IMR-90 (cell line): ENCODE measurements at regions of chr12 and their contacts with region 1.

Region 1: DNA sequence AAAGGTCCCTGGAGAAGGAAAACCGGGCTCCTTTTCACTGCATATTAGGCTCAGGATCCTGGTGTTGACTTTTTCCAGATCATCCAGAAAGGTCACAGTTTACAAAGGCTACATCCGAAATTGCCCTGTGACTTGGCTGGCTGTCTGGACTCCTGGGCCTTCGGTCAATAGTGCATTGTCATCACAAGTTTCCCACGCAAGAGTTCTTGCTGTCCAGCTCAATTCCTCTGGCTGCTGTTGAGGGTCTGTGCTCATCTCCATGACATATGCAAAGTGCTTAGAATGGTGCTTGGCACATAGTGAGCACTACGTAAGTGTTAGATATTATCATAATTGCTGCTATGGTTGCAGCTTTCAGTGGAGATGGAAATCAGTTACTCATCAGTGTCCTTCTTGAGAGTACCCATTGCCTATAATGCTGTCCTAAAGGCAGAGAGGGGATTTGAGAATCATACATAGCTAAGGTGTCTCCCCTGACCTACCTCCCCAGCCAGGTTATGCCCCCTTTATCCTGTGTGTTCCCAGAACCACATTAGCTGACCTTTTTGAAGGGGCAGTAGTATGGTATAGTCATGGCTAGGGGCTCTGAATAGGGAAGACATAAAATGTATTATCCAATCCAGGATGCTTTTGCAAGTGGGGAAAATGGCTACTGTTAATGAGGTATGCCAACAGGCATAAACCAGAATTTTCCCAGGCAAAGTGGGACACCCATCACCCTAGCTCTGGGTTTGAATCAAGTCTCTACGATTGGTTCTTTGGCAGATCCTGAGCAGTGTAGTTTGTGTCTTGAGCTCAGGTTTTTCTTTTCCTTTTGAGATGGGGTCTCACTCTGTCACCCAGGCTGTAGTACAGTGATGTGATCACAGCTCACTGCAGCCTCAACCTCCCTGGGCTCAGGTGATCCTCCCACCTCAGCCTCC is 132.0 kb upstream of the CCND2 start:
- DNase-seq: no peak
- ATAC-seq: no peak
- H3K4me3 ChIP-seq: no peak overlapping the region
- H3K27ac ChIP-seq: no peak overlapping the region
- H3K4me1 ChIP-seq: no peaks in the 10 kb centered on the region
- H3K27me3 ChIP-seq: peaks cover 4% of the 10 kb centered on the region; the same call in 1 of the 2 replicates
- CTCF ChIP-seq: no peak
- POLR2A ChIP-seq: no peak
- RAD21 ChIP-seq: no peak

Region 2: DNA sequence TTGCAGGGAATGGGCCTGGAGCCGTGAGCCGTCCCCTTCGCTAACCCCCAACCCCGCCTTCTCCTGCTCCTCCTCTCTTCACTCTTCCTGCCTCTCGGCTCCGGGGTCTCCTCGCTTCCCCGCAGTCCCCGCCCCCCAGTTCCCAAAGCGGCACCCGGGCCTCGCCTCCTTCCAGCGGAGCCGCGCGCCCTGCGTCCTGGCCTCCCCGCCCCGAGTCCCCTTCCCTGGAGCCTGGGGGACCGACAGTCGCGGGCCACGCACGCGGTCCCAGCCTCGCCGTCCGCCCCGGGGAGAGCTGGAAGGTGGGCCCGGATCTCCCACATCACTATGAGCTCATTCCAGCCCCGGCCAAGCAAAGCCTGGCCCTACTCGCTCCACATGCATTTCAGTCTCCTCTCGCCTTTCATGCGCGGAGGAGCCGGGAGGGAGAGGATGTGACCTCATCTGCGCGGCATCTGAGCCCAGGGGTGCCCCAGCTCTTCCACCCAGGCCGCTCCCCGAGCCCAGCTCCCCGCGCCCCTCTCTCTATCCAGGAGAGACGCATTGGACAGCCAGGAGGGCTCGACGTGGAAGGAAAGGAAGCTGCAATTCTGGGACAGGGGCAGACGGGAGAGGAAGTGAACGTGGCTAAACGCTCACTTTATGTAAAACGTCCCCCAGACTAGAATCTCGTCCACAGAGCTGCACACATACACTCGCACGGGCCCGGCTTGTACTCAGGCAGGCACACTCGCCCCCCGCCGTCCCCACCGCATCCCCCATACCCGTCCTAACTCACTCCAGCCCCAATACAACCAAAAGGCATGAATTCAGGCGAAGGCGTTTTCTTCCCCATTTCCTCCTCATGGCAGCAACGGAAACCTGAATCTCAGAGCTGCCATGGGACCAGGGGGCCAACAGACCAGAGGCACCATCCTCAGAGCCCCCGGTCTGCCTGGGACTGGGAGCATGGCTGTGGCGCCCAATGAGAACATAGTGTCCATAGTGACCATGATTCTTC is 23.2 kb after region 1 on chr12:
- CTCF ChIA-PET with region 1: no interaction called
- POLR2A ChIA-PET with region 1: interaction called, 4 read pairs
- dilution Hi-C with region 1: no loop called
- in situ Hi-C with region 1: no loop called
- intact Hi-C with region 1: loop called (anchors 2 kb)
- DNase-seq: peak; percentile 75
- ATAC-seq: peak; percentile 97
- H3K4me3 ChIP-seq: peak overlapping the region; percentile 41
- H3K27ac ChIP-seq: peak overlapping the region; percentile 78
- H3K4me1 ChIP-seq: peaks cover 2% of the 10 kb centered on the region; the same call in 1 of the 2 replicates
- H3K27me3 ChIP-seq: peaks cover 1% of the 10 kb centered on the region; the same call in 1 of the 2 replicates
- CTCF ChIP-seq: no peak
- POLR2A ChIP-seq: peak; percentile 50; the same call in 1 of the 2 replicates
- RAD21 ChIP-seq: no peak